Sigmoid colon (tissue), 7 donors: ENCODE measurements at regions of chr10 and their contacts with region 1.

Region 1: DNA sequence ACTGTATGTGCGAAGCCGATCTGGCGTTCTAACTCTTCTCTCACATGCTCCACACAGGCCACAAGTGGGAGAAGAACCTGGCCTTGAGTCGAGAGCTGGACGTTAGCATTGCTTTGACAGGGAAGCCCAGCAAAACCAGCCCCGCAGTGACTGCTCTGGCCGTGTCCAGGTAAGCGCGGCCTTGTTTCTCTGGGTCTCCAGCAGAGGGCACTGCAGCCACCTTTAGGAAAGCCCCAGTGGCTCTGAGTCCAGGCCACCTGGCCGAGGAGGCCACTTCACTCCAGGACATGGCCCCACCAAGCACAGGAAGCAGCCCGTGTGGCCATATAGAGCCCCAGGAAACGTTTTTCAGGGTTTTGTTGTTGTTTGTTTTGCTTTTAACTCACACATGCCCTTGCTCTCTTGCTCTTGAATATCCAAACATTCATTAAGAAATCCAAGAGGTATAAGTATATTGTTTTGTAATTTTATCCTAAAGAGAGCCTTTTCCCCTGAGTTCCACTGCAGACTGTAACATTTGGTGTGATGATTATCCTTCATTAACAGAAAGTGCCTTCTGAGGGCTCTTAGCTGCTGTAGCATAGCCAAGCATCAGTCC is 41.8 kb upstream of the LRRC18 start:
- DNase-seq: no peak
- H3K4me3 ChIP-seq: no peak overlapping the region
- H3K27ac ChIP-seq: no peak overlapping the region
- H3K4me1 ChIP-seq: peaks cover 0 to 5% (median 2%) of the 10 kb centered on the region in 4 donors
- H3K27me3 ChIP-seq: no peaks in the 10 kb centered on the region
- CTCF ChIP-seq: peak; percentile 22 to 85 (median 65)
- EP300 ChIP-seq: no peak
- POLR2A ChIP-seq: no peak

Region 2: GRCh38 chr10:48470115-48470892 is 511.1 kb before region 1 on chr10:
- intact Hi-C with region 1: no loop called
- DNase-seq: no peak
- H3K4me3 ChIP-seq: no peak overlapping the region
- H3K27ac ChIP-seq: no peak overlapping the region
- H3K4me1 ChIP-seq: peaks cover 0 to 20% (median 17%) of the 10 kb centered on the region in 4 donors
- H3K27me3 ChIP-seq: peaks cover 0 to 7% (median 4%) of the 10 kb centered on the region in 3 donors
- CTCF ChIP-seq: no peak
- EP300 ChIP-seq: no peak
- POLR2A ChIP-seq: no peak

Region 3: DNA sequence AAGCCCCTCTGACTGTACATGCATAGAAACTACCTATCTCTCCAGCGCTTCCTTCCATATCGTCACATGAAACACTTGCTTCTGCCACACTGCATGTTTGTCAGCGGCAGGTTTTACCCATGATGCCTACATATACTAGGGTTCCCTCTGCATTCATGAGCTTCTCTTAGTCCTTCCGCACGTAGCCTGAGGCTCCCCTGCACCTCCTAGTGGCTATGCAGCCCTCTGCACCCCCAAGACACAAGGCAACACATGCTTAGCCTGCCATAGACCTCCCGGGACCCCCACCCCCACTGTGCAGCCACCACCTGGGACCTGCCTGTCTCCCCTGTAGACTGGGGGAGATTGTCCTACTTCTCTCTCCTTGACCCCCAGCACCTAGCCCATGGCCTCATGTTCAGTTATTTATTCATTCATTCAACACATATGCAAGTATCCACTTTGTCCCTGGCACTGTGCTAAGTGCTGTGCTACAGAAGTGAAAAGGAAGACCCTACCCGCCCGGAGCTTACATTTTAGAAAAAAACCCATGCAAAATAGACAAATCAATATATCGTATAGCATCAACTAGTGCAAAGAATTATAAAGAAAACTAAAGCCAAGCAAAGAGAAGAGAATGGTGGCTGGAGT is 183.3 kb after region 1 on chr10:
- intact Hi-C with region 1: loop called (anchors 5 kb)
- DNase-seq: no peak
- H3K4me3 ChIP-seq: no peak overlapping the region
- H3K27ac ChIP-seq: no peak overlapping the region
- H3K4me1 ChIP-seq: no peaks in the 10 kb centered on the region
- H3K27me3 ChIP-seq: no peaks in the 10 kb centered on the region
- CTCF ChIP-seq: peak in 3 of 4 experiments; percentile 36 to 59 (median 55)
- EP300 ChIP-seq: no peak
- POLR2A ChIP-seq: no peak

Region 4: DNA sequence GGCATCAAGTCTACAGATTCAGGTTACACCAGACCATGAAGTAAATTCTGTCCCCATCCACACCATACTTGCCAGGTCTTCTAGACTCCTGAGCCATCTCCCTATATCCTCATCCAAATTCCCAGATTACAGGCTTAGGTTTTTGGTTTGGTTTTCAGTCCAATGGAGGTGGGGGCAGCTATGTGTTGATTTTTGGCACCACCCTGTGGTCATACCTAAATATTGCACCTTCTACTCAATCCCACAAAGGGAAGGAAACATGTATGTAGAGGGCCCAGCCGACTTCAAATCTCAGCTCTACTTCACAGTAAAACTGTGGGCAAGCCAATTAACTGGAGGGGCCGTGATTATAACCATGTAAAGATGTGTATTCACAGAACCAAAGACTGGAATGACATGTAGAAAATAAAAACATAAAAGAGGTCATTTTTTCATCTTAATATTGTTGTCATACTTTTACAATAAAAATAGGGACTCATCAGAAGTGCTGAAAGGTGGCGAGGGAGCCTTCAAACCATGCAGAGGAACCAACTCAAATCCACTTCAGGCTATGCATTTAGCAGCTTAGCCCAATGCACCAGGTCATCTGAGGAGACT is 537.7 kb after region 1 on chr10:
- intact Hi-C with region 1: loop called (anchors 10 kb)
- DNase-seq: no peak
- H3K4me3 ChIP-seq: no peak overlapping the region
- H3K27ac ChIP-seq: no peak overlapping the region
- H3K4me1 ChIP-seq: no peaks in the 10 kb centered on the region
- H3K27me3 ChIP-seq: no peaks in the 10 kb centered on the region
- CTCF ChIP-seq: peak in 3 of 4 experiments; percentile 35 to 61 (median 45)
- EP300 ChIP-seq: no peak
- POLR2A ChIP-seq: no peak